ENCODE measurements at regions of chr5 and their contacts with region 1.

Region 1: DNA sequence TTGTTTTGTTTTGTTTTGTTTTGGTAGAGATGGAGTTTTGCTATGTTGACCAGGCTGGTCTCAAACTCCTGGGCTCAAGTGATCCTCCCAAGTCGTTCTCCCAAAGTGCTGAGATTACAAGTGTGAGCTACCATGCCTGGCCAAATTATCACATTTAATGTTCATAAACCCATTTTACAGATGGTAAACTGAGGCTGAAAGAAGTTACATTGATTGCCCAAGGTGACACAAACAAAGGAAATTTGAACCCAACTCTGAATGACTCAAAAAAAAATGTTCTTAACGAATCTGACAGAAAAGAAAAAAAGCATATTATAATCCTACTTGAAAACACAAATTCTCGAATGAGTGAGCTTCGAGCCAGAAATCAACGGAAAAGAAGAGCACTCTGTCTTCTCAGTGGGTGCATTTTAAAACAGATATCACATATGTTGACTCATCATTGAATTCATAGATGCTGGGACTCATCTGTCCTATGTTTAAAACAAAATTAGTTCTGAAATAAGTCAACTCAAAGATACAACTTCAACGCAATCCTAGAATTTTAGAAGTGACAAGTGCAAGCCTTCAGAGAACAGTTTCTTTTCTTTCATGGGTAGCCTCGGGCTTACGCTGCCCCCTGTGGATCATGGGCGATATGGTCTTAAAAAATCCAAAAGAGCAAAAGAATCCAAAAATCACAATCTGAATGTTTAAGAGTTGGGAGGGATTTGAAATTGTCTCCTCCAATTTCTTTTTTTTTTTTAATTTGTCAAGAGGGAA is 28.4 kb downstream of the TIMD4 start:
- DNase-seq: peak in 8 of 9 donors; percentile 37 to 68 (median 62)
- ATAC-seq: peak; percentile 81
- H3K4me3 ChIP-seq: peak overlapping the region; percentile 25
- H3K4me3 Mint-ChIP-seq: peak overlapping the region in 7 of 10 donors; percentile 17 to 63 (median 54)
- H3K27ac ChIP-seq: no peak overlapping the region
- H3K27ac Mint-ChIP-seq: peak overlapping the region; percentile 36 to 97 (median 60)
- H3K4me1 ChIP-seq: peaks cover 9 to 16% of the 10 kb centered on the region in 2 donors
- H3K4me1 Mint-ChIP-seq: peaks cover 8 to 80% (median 49%) of the 10 kb centered on the region in 7 donors
- H3K27me3 ChIP-seq: no peaks in the 10 kb centered on the region
- H3K27me3 Mint-ChIP-seq: no peaks in the 10 kb centered on the region

Region 2: GRCh38 chr5:155136216-155136850 is 1798.3 kb before region 1 on chr5:
- CTCF ChIA-PET with region 1: no interaction called
- POLR2A ChIA-PET with region 1: no interaction called
- intact Hi-C with region 1: loop called in 1 of 2 experiments (anchors 5 kb)
- DNase-seq: no peak
- ATAC-seq: no peak
- H3K4me3 ChIP-seq: no peak overlapping the region
- H3K4me3 Mint-ChIP-seq: no peak overlapping the region
- H3K27ac ChIP-seq: no peak overlapping the region
- H3K27ac Mint-ChIP-seq: no peak overlapping the region
- H3K4me1 ChIP-seq: no peaks in the 10 kb centered on the region
- H3K4me1 Mint-ChIP-seq: no peaks in the 10 kb centered on the region
- H3K27me3 ChIP-seq: no peaks in the 10 kb centered on the region
- H3K27me3 Mint-ChIP-seq: peaks cover 13 to 51% (median 45%) of the 10 kb centered on the region in 5 donors

Region 3: DNA sequence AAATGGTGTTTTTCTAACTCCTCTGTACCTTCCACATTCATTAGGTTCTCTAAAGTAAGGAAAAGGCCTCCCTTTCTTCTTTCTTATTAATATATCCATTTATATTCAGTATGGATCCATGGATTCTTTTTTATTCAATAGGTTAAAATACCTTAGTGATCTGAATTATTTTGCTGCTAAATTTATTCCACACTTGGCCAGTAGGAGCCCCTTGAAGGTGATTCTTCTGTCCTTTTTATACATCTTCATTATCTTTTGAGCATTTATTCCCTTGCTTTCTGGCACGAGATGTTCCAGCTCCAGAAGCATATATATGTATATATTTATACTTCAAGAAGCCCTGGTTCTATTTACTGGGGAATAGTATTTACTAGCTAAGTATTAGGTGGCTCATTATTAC is 919.5 kb before region 1 on chr5:
- CTCF ChIA-PET with region 1: no interaction called
- POLR2A ChIA-PET with region 1: no interaction called
- intact Hi-C with region 1: loop called in 1 of 2 experiments (anchors 10 kb)
- DNase-seq: no peak
- ATAC-seq: no peak
- H3K4me3 ChIP-seq: no peak overlapping the region
- H3K4me3 Mint-ChIP-seq: no peak overlapping the region
- H3K27ac ChIP-seq: no peak overlapping the region
- H3K27ac Mint-ChIP-seq: no peak overlapping the region
- H3K4me1 ChIP-seq: no peaks in the 10 kb centered on the region
- H3K4me1 Mint-ChIP-seq: no peaks in the 10 kb centered on the region
- H3K27me3 ChIP-seq: no peaks in the 10 kb centered on the region
- H3K27me3 Mint-ChIP-seq: peaks cover 0 to 26% (median 11%) of the 10 kb centered on the region in 5 donors

Region 4: DNA sequence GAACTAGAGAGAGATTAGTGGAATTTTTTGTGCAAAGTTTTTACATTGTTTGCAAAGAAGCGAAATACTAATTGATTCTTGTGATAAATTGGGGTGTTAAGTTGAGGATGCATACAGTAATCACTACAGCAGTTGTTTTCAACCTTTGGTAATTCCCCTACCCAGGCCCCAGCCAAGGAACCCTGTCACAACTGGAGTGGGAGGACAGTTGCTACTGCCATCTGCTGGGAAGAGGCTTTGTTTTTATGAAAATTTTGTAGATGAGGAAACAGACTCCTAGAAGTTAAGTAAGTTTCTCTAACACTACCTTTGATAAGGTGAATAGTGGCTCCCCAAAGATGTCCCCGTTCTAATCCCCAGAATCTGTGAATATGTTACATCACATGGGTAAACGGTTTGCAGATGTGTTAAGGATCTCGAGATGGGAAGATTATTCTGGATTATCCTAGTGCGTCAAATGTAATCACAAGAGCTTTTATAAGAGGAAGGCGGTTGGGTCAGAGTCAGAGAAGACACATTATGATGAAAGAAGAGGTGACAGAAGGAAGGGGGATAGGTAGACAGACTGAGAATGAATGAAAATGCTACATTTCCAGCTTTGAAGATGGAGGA is 118.5 kb before region 1 on chr5:
- CTCF ChIA-PET with region 1: no interaction called
- POLR2A ChIA-PET with region 1: no interaction called
- intact Hi-C with region 1: loop called in 1 of 2 experiments (anchors 5 kb)
- DNase-seq: peak in 3 of 9 donors; percentile 7 to 42 (median 20)
- ATAC-seq: no peak
- H3K4me3 ChIP-seq: no peak overlapping the region
- H3K4me3 Mint-ChIP-seq: no peak overlapping the region
- H3K27ac ChIP-seq: no peak overlapping the region
- H3K27ac Mint-ChIP-seq: peak overlapping the region in 1 of 9 donors; percentile 8
- H3K4me1 ChIP-seq: no peaks in the 10 kb centered on the region
- H3K4me1 Mint-ChIP-seq: peaks cover 0 to 6% (median 0%) of the 10 kb centered on the region in 7 donors
- H3K27me3 ChIP-seq: no peaks in the 10 kb centered on the region
- H3K27me3 Mint-ChIP-seq: peaks cover 0 to 2% (median 0%) of the 10 kb centered on the region in 5 donors

Region 5: DNA sequence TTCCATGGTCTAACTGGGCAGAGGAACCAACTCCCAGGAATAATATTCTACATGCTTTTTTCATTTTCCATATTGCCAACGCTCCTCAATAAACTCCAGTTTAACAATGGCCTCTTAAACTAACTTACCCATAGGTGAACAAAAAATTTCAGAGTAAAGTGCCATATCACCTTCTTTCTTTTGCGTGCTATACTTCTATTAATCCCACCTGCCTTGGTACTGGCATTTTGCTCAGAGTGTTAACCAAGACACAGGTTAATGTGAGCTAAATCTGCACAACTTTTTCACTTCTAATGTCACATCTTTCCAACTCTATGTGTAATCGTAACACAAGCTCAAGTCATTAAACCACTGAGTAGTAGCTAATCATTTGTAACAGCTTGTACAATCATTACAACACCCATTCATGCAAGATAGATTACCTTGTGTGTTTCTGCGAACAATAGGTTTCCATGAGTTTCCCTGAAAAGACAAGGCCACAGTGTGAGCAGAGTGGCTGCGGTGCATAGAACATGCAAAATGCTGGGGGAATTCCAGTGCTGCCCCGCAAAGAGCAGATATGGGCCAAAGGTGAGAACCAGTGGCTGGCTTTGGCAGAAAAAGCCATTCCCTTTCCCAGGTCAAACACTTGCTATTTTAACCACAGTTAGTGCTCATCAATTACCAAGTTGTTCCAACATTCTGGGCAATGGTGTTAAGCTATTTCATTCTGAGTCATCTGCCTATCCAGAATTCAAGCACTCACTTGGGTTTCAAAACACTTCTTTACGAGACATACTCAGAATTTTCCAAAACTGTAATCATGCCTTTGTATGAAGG is 14.4 kb before region 1 on chr5:
- CTCF ChIA-PET with region 1: interaction called, 4 read pairs
- POLR2A ChIA-PET with region 1: interaction called, 53 read pairs
- intact Hi-C with region 1: loop called in 1 of 2 experiments (anchors 1 kb)
- DNase-seq: peak in 1 of 9 donors; percentile 76
- ATAC-seq: peak; percentile 46
- H3K4me3 ChIP-seq: no peak overlapping the region
- H3K4me3 Mint-ChIP-seq: peak overlapping the region in 1 of 10 donors; percentile 79
- H3K27ac ChIP-seq: no peak overlapping the region
- H3K27ac Mint-ChIP-seq: peak overlapping the region in 7 of 9 donors; percentile 18 to 94 (median 52)
- H3K4me1 ChIP-seq: peaks cover 9 to 10% of the 10 kb centered on the region in 2 donors
- H3K4me1 Mint-ChIP-seq: peaks cover 12 to 78% (median 67%) of the 10 kb centered on the region in 7 donors
- H3K27me3 ChIP-seq: no peaks in the 10 kb centered on the region
- H3K27me3 Mint-ChIP-seq: no peaks in the 10 kb centered on the region

Region 6: DNA sequence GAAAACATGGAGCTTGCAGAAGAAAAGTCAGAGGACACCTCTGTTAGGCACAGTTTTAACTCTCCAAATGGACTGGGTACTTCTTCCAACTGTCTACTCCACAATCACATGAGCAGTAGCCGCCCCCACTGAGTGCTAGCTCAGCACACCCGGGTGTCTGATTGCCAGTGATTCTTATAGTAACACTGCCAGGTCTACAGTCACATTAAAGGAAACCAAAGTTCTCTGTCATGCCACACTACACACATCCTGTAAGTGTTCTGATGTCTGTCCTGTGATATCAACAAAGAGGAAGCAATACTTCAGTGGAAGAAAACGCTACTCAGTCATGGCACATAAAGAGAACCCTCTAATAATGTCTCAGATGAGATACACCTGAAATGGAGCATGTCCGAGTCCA is 174.3 kb after region 1 on chr5 and contains the start of gene HAVCR2:
- CTCF ChIA-PET with region 1: no interaction called
- POLR2A ChIA-PET with region 1: no interaction called
- intact Hi-C with region 1: no loop called
- DNase-seq: peak; percentile 20 to 73 (median 57)
- ATAC-seq: peak; percentile 90
- H3K4me3 ChIP-seq: peak within 1 kb of the TSS; percentile 27
- H3K4me3 Mint-ChIP-seq: peak within 1 kb of the TSS; percentile 81 to 97 (median 85)
- H3K27ac ChIP-seq: peak within 1 kb of the TSS; percentile 55
- H3K27ac Mint-ChIP-seq: peak within 1 kb of the TSS; percentile 82 to 96 (median 92)
- H3K4me1 ChIP-seq: peaks cover 19 to 22% of the 10 kb centered on the region in 2 donors
- H3K4me1 Mint-ChIP-seq: peaks cover 16 to 68% (median 47%) of the 10 kb centered on the region in 7 donors
- H3K27me3 ChIP-seq: no peaks in the 10 kb centered on the region
- H3K27me3 Mint-ChIP-seq: no peaks in the 10 kb centered on the region
- total RNA-seq, gene HAVCR2: 5.1 to 110 (median 5.5) TPM

Region 7: GRCh38 chr5:157354800-157355199 is 420.2 kb after region 1 on chr5:
- CTCF ChIA-PET with region 1: no interaction called
- POLR2A ChIA-PET with region 1: no interaction called
- intact Hi-C with region 1: no loop called
- DNase-seq: no peak
- ATAC-seq: no peak
- H3K4me3 ChIP-seq: no peak overlapping the region
- H3K4me3 Mint-ChIP-seq: no peak overlapping the region
- H3K27ac ChIP-seq: no peak overlapping the region
- H3K27ac Mint-ChIP-seq: peak overlapping the region in 3 of 9 donors; percentile 69 to 77 (median 73)
- H3K4me1 ChIP-seq: no peaks in the 10 kb centered on the region
- H3K4me1 Mint-ChIP-seq: peaks cover 18 to 51% (median 29%) of the 10 kb centered on the region in 7 donors
- H3K27me3 ChIP-seq: no peaks in the 10 kb centered on the region
- H3K27me3 Mint-ChIP-seq: no peaks in the 10 kb centered on the region

Measured in naive thymus-derived CD4-positive, alpha-beta T cell (primary cell).